Heart left ventricle (tissue), 16 donors: ENCODE measurements at regions of chr22 and their contacts with region 1.

Region 1: DNA sequence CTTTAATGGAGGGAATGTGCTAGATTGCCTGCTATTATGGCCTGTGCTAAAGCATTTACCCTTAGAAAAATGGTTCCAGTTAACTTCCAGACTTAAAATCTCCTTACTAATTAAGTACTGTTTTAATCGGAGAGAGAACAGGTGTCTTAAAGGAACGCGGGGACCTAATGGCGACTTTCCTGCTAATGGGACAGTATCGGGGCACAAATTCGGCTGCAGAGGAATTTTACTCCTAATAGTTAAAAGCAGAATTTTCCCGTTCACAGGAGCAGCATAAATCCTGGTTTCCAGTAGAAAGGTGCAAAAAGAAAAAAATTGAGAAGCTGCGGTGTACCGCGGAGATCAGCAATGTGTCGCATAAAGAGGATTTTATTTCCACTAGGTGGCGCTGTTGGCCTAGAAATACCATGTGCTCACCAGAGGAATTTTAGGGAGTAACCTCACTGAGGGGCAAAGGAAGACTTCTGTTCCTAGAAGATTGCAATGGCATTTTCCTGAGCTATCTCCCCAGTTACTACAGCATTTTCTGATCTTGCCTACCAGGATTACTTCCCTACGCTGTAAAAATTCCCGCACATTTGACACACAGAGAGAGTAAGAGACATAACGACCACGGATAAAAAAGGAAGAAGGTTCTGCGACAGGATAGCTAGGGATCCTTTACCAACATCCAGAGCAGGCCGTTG is 44.5 kb downstream of the ZNF280B start:
- DNase-seq: peak in 2 of 5 donors; percentile 42 to 53
- ATAC-seq: peak in 3 of 4 donors; percentile 49 to 73 (median 61)
- H3K4me3 ChIP-seq: no peak overlapping the region
- H3K27ac ChIP-seq: no peak overlapping the region
- H3K4me1 ChIP-seq: no peaks in the 10 kb centered on the region
- H3K27me3 ChIP-seq: peaks cover 0 to 49% (median 13%) of the 10 kb centered on the region in 9 donors
- CTCF ChIP-seq: peak; percentile 47 to 86 (median 74)
- POLR2A ChIP-seq: peak in 1 of 2 donors; percentile 25

Region 2: GRCh38 chr22:22687638-22688500 is 223.9 kb after region 1 on chr22:
- intact Hi-C with region 1: loop called in 5 of 10 experiments (anchors 5 to 10 kb)
- DNase-seq: peak in 1 of 5 donors; percentile 29
- ATAC-seq: peak; percentile 32 to 85 (median 74)
- H3K4me3 ChIP-seq: no peak overlapping the region
- H3K27ac ChIP-seq: no peak overlapping the region
- H3K4me1 ChIP-seq: peaks cover 0 to 2% (median 0%) of the 10 kb centered on the region in 12 donors
- H3K27me3 ChIP-seq: no peaks in the 10 kb centered on the region
- CTCF ChIP-seq: peak; percentile 58 to 84 (median 70)
- POLR2A ChIP-seq: no peak

Region 3: DNA sequence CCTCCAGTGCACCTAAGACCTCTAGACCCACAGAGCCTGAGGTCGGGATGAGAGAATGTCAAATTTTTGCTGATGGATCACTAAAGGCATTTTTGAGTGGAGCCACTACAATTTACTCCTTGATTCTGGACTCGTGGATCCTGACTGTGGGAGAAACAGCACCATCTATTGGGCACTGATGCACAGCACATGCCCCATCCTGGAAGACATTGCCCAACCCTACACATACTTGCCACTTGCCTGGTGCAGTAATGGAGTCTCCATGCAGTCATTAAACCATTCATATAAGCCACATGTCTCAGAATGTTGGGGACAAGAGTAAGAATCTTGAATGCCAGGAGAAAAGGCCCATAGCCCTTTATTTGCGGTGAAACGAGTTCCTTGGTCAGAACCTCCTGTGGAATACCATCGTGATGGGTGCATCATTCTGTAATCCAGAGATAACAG is 284.3 kb after region 1 on chr22:
- intact Hi-C with region 1: loop called in 2 of 10 experiments (anchors 5 kb)
- DNase-seq: peak in 1 of 5 donors; percentile 34
- ATAC-seq: peak in 3 of 4 donors; percentile 73 to 81 (median 75)
- H3K4me3 ChIP-seq: no peak overlapping the region
- H3K27ac ChIP-seq: no peak overlapping the region
- H3K4me1 ChIP-seq: peaks cover 0 to 10% (median 0%) of the 10 kb centered on the region in 12 donors
- H3K27me3 ChIP-seq: peaks cover 0 to 31% (median 8%) of the 10 kb centered on the region in 9 donors
- CTCF ChIP-seq: peak; percentile 45 to 81 (median 64)
- POLR2A ChIP-seq: no peak

Region 4: DNA sequence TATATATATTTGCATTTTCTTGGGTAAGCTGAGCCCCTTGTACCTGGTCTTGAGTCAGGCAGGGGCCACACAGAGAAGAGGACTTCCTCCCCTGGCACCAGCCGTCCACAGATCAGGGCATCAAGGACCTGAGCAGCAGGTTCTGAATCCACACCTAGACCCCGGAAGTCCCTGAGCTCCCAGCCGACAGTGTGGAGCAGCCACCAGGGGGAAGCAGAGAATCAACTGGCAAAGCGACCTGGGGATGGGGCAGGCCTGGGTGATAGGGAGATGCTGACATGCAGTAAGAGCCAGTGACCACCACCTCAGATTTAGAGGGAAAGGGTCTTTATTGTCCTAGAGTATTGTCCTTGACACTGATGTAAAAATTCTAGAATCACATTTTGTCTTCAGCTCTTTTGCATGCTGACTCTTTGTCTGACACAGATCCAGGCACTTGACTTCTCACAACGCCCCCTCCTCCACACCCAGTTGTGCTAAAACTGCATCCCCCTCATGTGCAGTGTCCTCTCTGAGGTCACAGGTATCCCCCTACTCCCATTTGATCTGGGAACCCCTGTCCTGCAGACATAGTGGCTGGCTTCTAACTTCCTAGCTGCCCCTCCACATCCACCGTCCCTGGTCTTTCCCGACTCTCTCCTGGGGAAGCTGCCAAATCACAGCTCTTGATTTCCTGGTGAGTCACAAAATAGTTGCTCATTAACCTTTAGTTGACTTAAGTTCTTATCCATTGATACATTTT is 289.7 kb after region 1 on chr22:
- intact Hi-C with region 1: loop called in 2 of 10 experiments (anchors 5 kb)
- DNase-seq: peak in 2 of 5 donors; percentile 33 to 39
- ATAC-seq: peak in 2 of 4 donors; percentile 49 to 56
- H3K4me3 ChIP-seq: no peak overlapping the region
- H3K27ac ChIP-seq: peak overlapping the region in 1 of 12 donors; percentile 70
- H3K4me1 ChIP-seq: peaks cover 0 to 21% (median 0%) of the 10 kb centered on the region in 12 donors
- H3K27me3 ChIP-seq: peaks cover 0 to 28% (median 0%) of the 10 kb centered on the region in 9 donors
- CTCF ChIP-seq: peak; percentile 22 to 60 (median 48)
- POLR2A ChIP-seq: no peak

Region 5: GRCh38 chr22:22942511-22943329 is 478.7 kb after region 1 on chr22:
- intact Hi-C with region 1: loop called in 1 of 10 experiments (anchors 5 kb)
- DNase-seq: peak; percentile 47 to 68 (median 54)
- ATAC-seq: peak in 3 of 4 donors; percentile 51 to 67 (median 54)
- H3K4me3 ChIP-seq: no peak overlapping the region
- H3K27ac ChIP-seq: no peak overlapping the region
- H3K4me1 ChIP-seq: peaks cover 0 to 5% (median 0%) of the 10 kb centered on the region in 12 donors
- H3K27me3 ChIP-seq: peaks cover 0 to 11% (median 0%) of the 10 kb centered on the region in 9 donors
- CTCF ChIP-seq: peak; percentile 52 to 72 (median 62)
- POLR2A ChIP-seq: no peak

Region 6: DNA sequence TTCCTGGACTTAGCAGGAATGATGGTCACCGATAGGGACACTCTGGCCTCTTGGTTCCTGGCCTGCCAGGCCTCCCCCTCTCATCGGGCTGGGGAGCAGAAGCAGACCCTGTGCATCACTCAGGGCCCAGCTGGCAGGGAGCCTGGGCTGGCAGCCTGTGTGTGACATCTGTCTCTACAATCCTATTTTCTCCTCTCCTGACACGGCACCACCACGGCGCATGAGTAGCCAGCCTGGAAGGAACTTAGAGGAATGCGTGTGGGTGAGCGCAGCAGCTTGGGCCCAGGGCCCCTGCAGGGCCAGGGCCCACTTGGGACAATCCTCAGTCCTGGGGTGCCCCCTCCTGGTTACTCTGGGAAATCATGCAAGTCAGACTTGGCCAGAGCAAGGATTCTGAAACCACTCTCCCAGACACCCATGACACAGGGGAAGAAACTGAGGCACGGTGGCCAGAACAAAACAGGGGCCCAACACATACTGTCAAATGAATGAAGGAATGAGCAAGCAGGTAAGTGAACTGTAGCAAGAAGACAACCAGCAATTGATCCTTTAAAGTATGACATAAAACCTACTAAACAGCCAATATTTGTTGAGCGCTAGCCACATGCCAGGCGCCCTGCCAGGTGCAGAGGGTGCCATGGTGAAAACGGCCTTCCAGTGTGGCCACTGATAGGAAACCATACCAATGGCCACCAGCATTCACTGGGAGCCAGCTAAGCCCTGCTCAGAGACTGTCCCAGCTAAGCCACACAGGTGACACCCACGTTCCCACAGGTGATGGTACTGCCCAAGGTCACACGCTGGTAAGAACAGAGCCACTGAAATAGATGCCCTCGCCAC is 664.5 kb after region 1 on chr22:
- intact Hi-C with region 1: loop called in 1 of 10 experiments (anchors 5 kb)
- DNase-seq: peak; percentile 70 to 76 (median 72)
- ATAC-seq: peak; percentile 71 to 95 (median 88)
- H3K4me3 ChIP-seq: no peak overlapping the region
- H3K27ac ChIP-seq: no peak overlapping the region
- H3K4me1 ChIP-seq: peaks cover 0 to 10% (median 3%) of the 10 kb centered on the region in 12 donors
- H3K27me3 ChIP-seq: no peaks in the 10 kb centered on the region
- CTCF ChIP-seq: peak; percentile 67 to 91 (median 80)
- POLR2A ChIP-seq: no peak